ENCODE measurements at regions of chr4 and their contacts with region 1.

Region 1: DNA sequence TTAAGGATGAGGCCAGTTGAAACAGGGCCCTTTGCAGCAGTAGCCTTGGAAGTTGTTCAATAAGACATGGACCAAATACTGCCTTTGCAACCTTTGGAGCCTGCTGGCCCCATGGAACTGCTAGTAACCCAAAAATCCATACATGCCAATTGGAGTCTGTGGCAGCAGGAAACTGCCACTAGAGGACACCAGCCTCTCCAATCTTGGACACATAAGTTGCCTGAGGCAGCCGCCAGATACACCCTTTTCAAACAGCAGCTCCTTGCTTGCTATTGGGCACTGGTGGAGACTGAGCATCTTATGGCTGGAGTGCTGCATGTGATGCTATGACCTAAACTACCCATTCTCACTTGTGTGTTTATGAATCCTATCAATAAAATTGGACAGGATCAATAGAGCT is 14.8 kb upstream of the LAP3 start:
- DNase-seq: peak; percentile 12
- H3K4me3 ChIP-seq: no peak overlapping the region
- H3K27ac ChIP-seq: no peak overlapping the region
- H3K4me1 ChIP-seq: peaks cover 14% of the 10 kb centered on the region
- H3K27me3 ChIP-seq: no peaks in the 10 kb centered on the region

Region 2: GRCh38 chr4:17810260-17811077 is 248.3 kb after region 1 on chr4 and contains the starts of genes DCAF16 and NCAPG:
- in situ Hi-C with region 1: loop called (anchors 25 kb)
- DNase-seq: peak; percentile 100
- H3K4me3 ChIP-seq: peak within 1 kb of the TSS; percentile 97
- H3K27ac ChIP-seq: peak within 1 kb of the TSS; percentile 95
- H3K4me1 ChIP-seq: peaks cover 61% of the 10 kb centered on the region
- H3K27me3 ChIP-seq: no peaks in the 10 kb centered on the region
- total RNA-seq, gene DCAF16: 22.1 and 24.4 TPM in 2 replicates
- total RNA-seq, gene NCAPG: 15.6 and 18.5 TPM in 2 replicates

Measured in GM23248 (cell line).